IMR-90 (cell line): ENCODE measurements at regions of chr7 and their contacts with region 1.

Region 1: DNA sequence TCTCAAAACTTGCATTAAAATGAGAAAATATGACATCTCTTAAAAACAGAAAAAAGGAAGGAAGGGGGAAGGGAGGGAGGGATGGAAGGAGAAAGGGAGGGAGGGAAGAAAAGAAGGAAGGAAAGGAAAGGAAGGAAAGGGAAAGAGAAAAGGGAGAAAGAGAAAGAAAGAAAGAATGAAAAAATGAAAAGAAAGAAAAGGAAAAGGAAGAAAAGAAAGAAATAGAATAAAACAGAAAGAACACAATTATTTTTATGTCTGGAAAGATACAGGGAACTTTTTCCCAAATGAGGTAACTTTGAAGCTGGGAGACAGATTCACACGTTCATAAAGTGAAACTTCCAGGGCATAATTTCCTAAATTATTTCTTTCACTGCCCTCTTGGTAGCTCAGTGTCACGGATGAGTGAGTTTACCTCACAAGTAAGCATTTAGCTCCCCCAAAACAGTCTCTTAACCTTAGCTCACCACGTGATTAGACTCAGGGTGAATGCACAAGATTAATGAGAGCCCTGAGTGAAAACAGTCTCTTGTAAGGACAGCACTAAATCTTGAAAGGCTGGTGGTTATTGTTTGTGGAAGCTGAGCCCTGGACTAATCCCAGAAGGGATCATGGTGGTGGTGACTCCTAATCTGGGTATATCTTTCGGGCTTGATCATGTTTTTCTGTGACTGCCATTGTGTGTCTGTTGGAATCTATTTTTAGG is 74.1 kb upstream of the HDAC9 start:
- DNase-seq: no peak
- ATAC-seq: no peak
- H3K4me3 ChIP-seq: no peak overlapping the region
- H3K27ac ChIP-seq: peak overlapping the region; percentile 37; the same call in 1 of the 2 replicates
- H3K4me1 ChIP-seq: peaks cover 8% of the 10 kb centered on the region; the same call in 1 of the 2 replicates
- H3K27me3 ChIP-seq: no peaks in the 10 kb centered on the region
- CTCF ChIP-seq: no peak
- POLR2A ChIP-seq: no peak
- RAD21 ChIP-seq: no peak

Region 2: DNA sequence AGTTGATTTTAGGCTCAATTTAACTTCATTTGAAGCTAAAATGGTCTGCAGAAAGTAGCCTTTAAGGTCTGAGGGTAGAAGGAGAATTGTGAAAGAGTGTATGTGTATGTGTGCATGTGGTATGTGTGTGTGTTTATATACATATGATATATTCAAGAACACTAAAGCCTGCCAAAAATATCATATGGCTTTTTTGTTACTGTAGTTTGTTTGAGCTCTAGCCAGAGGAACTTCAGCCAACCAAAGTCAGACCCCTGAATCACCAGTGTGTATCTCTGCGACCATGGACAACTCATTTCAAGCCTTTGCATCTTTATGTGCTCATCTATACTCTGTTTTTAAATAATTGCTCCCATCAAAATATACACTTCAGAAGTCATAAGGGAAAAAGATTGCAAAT is 15.7 kb after region 1 on chr7:
- CTCF ChIA-PET with region 1: no interaction called
- POLR2A ChIA-PET with region 1: interaction called, 11 read pairs
- dilution Hi-C with region 1: no loop called
- in situ Hi-C with region 1: no loop called
- intact Hi-C with region 1: no loop called
- DNase-seq: peak; percentile 84
- ATAC-seq: peak; percentile 49
- H3K4me3 ChIP-seq: no peak overlapping the region
- H3K27ac ChIP-seq: no peak overlapping the region
- H3K4me1 ChIP-seq: peaks cover 2% of the 10 kb centered on the region; the same call in 1 of the 2 replicates
- H3K27me3 ChIP-seq: no peaks in the 10 kb centered on the region
- CTCF ChIP-seq: no peak
- POLR2A ChIP-seq: no peak
- RAD21 ChIP-seq: no peak

Region 3: GRCh38 chr7:18457832-18458231 is 36.4 kb after region 1 on chr7:
- CTCF ChIA-PET with region 1: no interaction called
- POLR2A ChIA-PET with region 1: no interaction called
- dilution Hi-C with region 1: no loop called
- in situ Hi-C with region 1: no loop called
- intact Hi-C with region 1: no loop called
- DNase-seq: no peak
- ATAC-seq: no peak
- H3K4me3 ChIP-seq: no peak overlapping the region
- H3K27ac ChIP-seq: no peak overlapping the region
- H3K4me1 ChIP-seq: no peaks in the 10 kb centered on the region
- H3K27me3 ChIP-seq: no peaks in the 10 kb centered on the region
- CTCF ChIP-seq: no peak
- POLR2A ChIP-seq: no peak
- RAD21 ChIP-seq: no peak